ENCODE measurements at regions of chr1 and their contacts with region 1.

Region 1: DNA sequence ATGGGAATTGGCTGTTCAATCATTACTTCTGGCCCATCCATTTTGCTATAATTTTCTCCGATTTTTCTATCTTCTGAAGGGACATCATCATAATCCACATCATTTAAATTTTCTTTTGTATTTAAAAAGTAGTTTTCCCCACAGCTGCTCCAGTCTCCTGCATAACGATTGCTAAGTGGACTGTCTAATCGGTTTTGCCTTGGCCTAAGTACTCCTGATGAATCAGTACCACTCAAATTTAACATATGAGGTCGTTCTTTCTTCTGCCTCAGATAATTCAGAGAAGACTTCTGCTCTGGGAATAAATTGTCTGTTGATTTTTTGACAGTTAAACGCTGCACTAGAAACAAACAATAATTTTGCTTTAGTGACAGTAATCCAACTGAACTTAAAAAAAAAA is 41.9 kb downstream of the SYDE2 start:
- DNase-seq: no peak
- ATAC-seq: no peak
- H3K4me3 ChIP-seq: no peak overlapping the region
- H3K27ac ChIP-seq: no peak overlapping the region
- H3K4me1 ChIP-seq: no peaks in the 10 kb centered on the region
- H3K27me3 ChIP-seq: no peaks in the 10 kb centered on the region
- CTCF ChIP-seq: no peak
- POLR2A ChIP-seq: no peak
- RAD21 ChIP-seq: no peak

Region 2: DNA sequence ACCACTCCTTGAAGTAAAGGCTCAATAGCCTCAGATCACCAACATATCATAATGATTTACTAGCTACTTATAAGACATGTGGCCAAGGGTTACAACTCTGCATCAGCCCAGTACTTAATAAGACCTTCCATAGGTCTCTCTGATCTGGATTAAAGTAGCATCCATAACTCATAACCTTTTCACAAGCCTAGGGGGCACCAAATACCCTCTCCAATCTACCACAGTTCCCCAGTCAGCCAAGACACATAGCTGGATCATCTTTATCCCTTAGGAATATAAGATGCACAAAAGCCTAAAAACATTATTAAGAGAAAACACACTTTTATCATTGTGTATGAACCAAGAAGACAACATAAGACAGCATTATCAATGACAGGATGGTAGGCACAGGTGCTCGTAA is 490.7 kb before region 1 on chr1:
- CTCF ChIA-PET with region 1: no interaction called
- POLR2A ChIA-PET with region 1: no interaction called
- dilution Hi-C with region 1: no loop called
- in situ Hi-C with region 1: no loop called
- intact Hi-C with region 1: no loop called
- DNase-seq: no peak
- ATAC-seq: no peak
- H3K4me3 ChIP-seq: no peak overlapping the region
- H3K27ac ChIP-seq: no peak overlapping the region
- H3K4me1 ChIP-seq: no peaks in the 10 kb centered on the region
- H3K27me3 ChIP-seq: no peaks in the 10 kb centered on the region
- CTCF ChIP-seq: 0 out of 2 replicates have a peak, but pooled peaks have one; percentile 14
- POLR2A ChIP-seq: no peak
- RAD21 ChIP-seq: peak; percentile 31; the same call in 1 of the 2 replicates

Region 3: GRCh38 chr1:85188530-85188929 is 29.6 kb after region 1 on chr1:
- CTCF ChIA-PET with region 1: no interaction called
- POLR2A ChIA-PET with region 1: interaction called, 9 read pairs
- dilution Hi-C with region 1: no loop called
- in situ Hi-C with region 1: no loop called
- intact Hi-C with region 1: loop called (anchors 5 kb)
- DNase-seq: no peak
- ATAC-seq: no peak
- H3K4me3 ChIP-seq: no peak overlapping the region
- H3K27ac ChIP-seq: no peak overlapping the region
- H3K4me1 ChIP-seq: no peaks in the 10 kb centered on the region
- H3K27me3 ChIP-seq: no peaks in the 10 kb centered on the region
- CTCF ChIP-seq: no peak
- POLR2A ChIP-seq: no peak
- RAD21 ChIP-seq: no peak

Region 4: DNA sequence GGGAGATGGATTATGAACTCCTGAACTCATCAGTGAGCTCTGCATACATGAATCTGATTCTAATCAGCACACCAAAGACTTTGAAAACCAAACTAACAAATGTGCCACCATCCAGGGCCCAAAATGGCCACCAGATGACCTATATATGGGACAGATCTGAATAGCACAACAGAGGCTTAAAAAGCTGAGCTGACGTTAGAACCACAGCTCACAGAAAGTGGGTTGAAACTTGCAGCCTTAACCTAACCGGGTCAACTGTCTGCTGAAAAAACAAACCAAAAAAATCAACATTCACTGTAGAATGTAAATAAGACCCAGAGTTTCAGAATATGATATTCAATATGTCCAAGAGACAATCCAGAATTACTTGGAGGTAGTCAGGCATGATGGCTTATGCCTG is 56.9 kb after region 1 on chr1:
- CTCF ChIA-PET with region 1: no interaction called
- POLR2A ChIA-PET with region 1: no interaction called
- dilution Hi-C with region 1: no loop called
- in situ Hi-C with region 1: no loop called
- intact Hi-C with region 1: no loop called
- DNase-seq: no peak
- ATAC-seq: peak; percentile 65
- H3K4me3 ChIP-seq: no peak overlapping the region
- H3K27ac ChIP-seq: peak overlapping the region; percentile 49; the same call in 1 of the 2 replicates
- H3K4me1 ChIP-seq: peaks cover 9% of the 10 kb centered on the region
- H3K27me3 ChIP-seq: no peaks in the 10 kb centered on the region
- CTCF ChIP-seq: no peak
- POLR2A ChIP-seq: no peak
- RAD21 ChIP-seq: no peak